SK-N-SH (cell line): ENCODE measurements at regions of chr14 and their contacts with region 1.

Region 1: DNA sequence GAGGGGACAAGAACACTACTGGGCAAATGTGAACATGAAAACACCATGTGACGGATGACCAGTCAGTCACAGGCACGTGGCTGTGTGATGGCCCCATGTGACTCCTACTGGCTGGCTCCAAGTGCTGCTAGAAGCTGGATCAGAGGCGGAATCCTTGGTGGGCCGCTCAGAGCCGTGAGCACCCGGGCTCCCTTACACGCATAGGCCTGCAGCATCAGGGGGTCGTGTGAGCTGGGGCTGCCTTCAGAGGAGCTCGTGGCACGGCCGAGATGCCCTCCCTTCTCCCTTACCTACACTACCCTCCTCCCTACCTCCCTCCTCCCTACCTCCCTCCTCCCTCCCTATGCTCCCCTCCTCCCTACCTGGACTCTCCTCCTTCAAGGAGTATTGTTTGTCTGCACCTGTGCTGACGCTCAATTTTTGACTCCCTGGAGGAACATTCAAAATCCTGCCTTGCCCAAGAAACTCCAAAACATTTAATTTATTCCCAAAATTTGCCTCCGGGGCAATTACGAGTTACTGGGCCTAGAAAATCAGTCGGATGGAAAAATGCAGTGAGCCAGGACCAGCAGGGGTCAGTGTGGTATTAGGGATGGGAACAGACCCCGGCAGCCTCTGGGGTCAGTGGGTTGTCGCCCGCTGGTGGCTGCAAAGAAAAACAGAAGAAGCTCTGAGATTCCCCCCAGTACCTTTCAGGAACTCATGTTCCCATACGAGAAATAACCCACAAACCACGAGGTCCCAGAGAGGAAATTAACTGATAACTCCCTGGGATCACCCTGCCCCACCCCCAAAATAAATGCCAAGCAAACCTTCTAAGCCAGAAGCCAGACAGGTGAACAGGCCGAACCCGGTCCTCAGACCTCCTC is 61.2 kb downstream of the C14orf132 start:
- DNase-seq: peak; percentile 81
- H3K4me3 ChIP-seq: peak overlapping the region in 1 of 2 experiments; percentile 45; a peak in 1 of 4 replicates
- H3K27ac ChIP-seq: no peak overlapping the region
- H3K4me1 ChIP-seq: peaks cover 10 to 52% of the 10 kb centered on the region in 2 experiments; a peak in 2 of 4 replicates
- H3K27me3 ChIP-seq: no peaks in the 10 kb centered on the region
- CTCF ChIP-seq: peak; percentile 99
- EP300 ChIP-seq: no peak
- RAD21 ChIP-seq: peak; percentile 100

Region 2: GRCh38 chr14:95123891-95124579 is 976.4 kb before region 1 on chr14:
- CTCF ChIA-PET with region 1: no interaction called
- POLR2A ChIA-PET with region 1: no interaction called
- DNase-seq: no peak
- H3K4me3 ChIP-seq: no peak overlapping the region
- H3K27ac ChIP-seq: no peak overlapping the region
- H3K4me1 ChIP-seq: peaks cover 4 to 11% of the 10 kb centered on the region in 2 experiments; a peak in 3 of 4 replicates
- H3K27me3 ChIP-seq: no peaks in the 10 kb centered on the region
- CTCF ChIP-seq: no peak
- EP300 ChIP-seq: no peak
- RAD21 ChIP-seq: no peak

Region 3: DNA sequence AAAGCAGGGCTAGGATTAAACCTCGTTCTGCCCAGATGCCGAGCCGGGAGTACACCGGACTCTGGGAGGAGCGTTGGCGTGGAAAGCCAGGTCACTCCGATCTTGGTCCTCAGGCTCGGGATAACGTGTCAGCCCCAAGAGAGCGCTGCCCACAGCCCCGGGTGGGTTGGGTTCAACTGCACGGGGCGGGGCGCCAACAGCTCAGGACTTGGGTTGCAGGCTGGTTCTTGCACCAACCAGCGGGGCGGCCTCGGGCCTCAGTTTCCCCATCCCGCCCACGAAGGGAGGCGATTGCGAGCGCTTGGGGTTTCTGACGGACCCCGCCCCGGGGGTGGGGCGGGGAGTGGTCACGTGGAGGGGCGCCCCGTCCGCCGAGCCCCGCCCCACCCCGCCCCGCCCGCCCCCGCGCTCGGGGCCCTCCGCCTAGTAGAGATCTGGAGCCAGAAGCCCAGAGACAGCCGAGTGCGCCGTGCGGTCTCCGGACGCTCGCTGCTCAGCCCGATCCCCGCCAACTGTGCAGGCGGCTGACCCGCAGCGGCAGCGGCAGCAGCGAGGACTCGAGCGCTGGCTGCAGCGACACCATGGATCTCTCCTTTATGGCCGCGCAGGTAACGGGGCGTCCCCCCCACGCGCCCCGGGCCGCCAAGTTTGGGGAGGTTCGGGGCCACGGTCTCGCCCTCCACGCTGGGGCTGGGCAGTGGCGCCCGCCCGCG is 61.3 kb before region 1 on chr14 and contains the start of gene C14orf132:
- CTCF ChIA-PET with region 1: interaction called, 41 read pairs
- POLR2A ChIA-PET with region 1: interaction called, 16 read pairs
- DNase-seq: peak; percentile 96
- H3K4me3 ChIP-seq: peak within 1 kb of the TSS; percentile 81 to 92
- H3K27ac ChIP-seq: peak within 1 kb of the TSS; percentile 45 to 90
- H3K4me1 ChIP-seq: peaks cover 7 to 32% of the 10 kb centered on the region in 2 experiments
- H3K27me3 ChIP-seq: no peaks in the 10 kb centered on the region
- CTCF ChIP-seq: no peak
- EP300 ChIP-seq: no peak
- RAD21 ChIP-seq: no peak
- polyA plus RNA-seq, gene C14orf132: 5.5 and 7.1 TPM in 2 replicates

Region 4: DNA sequence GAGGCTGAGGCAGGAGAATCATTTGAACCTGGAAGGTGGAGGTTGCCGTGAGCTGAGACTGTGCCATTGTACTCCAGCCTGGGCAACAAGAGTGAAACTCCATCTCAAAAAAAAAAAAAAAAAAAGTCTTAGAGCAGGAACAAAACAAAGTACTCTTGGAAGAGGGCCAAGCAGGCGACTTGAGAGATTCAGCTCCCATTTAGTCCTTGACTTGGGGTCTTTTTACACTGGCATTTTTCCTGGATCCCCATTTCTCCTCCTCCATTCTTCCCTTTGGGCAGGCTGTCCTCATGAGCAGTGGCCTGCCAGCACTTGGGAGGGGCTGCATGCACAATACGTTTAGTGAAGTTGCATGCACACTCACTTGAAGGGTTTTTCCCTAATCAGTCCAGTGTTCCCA is 11.6 kb after region 1 on chr14:
- CTCF ChIA-PET with region 1: interaction called, 51 read pairs
- POLR2A ChIA-PET with region 1: no interaction called
- DNase-seq: no peak
- H3K4me3 ChIP-seq: no peak overlapping the region
- H3K27ac ChIP-seq: no peak overlapping the region
- H3K4me1 ChIP-seq: peaks cover 0 to 6% of the 10 kb centered on the region in 2 experiments; a peak in 2 of 4 replicates
- H3K27me3 ChIP-seq: no peaks in the 10 kb centered on the region
- CTCF ChIP-seq: no peak
- EP300 ChIP-seq: no peak
- RAD21 ChIP-seq: no peak

Region 5: GRCh38 chr14:96160076-96160912 is 59.9 kb after region 1 on chr14:
- CTCF ChIA-PET with region 1: interaction called, 15 read pairs
- POLR2A ChIA-PET with region 1: no interaction called
- DNase-seq: no peak
- H3K4me3 ChIP-seq: no peak overlapping the region
- H3K27ac ChIP-seq: no peak overlapping the region
- H3K4me1 ChIP-seq: peaks cover 4 to 11% of the 10 kb centered on the region in 2 experiments; a peak in 2 of 4 replicates
- H3K27me3 ChIP-seq: no peaks in the 10 kb centered on the region
- CTCF ChIP-seq: no peak
- EP300 ChIP-seq: no peak
- RAD21 ChIP-seq: no peak

Region 6: GRCh38 chr14:96260341-96260821 is 160.0 kb after region 1 on chr14:
- CTCF ChIA-PET with region 1: interaction called, 49 read pairs
- POLR2A ChIA-PET with region 1: interaction called, 7 read pairs
- DNase-seq: no peak
- H3K4me3 ChIP-seq: no peak overlapping the region
- H3K27ac ChIP-seq: no peak overlapping the region
- H3K4me1 ChIP-seq: peaks cover 5 to 9% of the 10 kb centered on the region in 2 experiments
- H3K27me3 ChIP-seq: no peaks in the 10 kb centered on the region
- CTCF ChIP-seq: no peak
- EP300 ChIP-seq: no peak
- RAD21 ChIP-seq: no peak

Region 7: GRCh38 chr14:96297000-96297399 is 196.6 kb after region 1 on chr14:
- CTCF ChIA-PET with region 1: interaction called, 20 read pairs
- POLR2A ChIA-PET with region 1: no interaction called
- DNase-seq: peak; percentile 31
- H3K4me3 ChIP-seq: no peak overlapping the region
- H3K27ac ChIP-seq: no peak overlapping the region
- H3K4me1 ChIP-seq: peaks cover 0 to 3% of the 10 kb centered on the region in 2 experiments; a peak in 2 of 4 replicates
- H3K27me3 ChIP-seq: no peaks in the 10 kb centered on the region
- CTCF ChIP-seq: peak; percentile 69
- EP300 ChIP-seq: no peak
- RAD21 ChIP-seq: peak; percentile 73

Region 8: DNA sequence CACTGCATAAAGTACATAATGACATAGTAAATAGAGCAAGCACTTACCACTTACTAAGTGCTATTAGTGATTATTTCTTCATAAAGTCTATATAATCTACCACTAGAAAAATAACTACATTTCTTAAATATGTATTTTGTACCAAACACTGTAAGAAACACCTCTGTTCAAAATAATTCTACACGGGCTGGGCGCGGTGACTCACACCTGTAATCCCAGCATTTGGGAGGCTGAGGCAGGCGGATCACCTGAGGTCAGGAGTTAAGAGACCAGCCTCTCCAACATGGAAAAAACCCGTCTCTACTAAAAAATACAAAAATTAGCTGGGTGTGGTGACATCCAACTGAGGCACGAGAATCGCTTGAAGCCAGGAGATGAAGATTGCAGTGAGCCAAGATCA is 223.8 kb after region 1 on chr14:
- CTCF ChIA-PET with region 1: no interaction called
- POLR2A ChIA-PET with region 1: no interaction called
- DNase-seq: no peak
- H3K4me3 ChIP-seq: no peak overlapping the region
- H3K27ac ChIP-seq: no peak overlapping the region
- H3K4me1 ChIP-seq: no peaks in the 10 kb centered on the region
- H3K27me3 ChIP-seq: no peaks in the 10 kb centered on the region
- CTCF ChIP-seq: no peak
- EP300 ChIP-seq: no peak
- RAD21 ChIP-seq: no peak

Region 9: DNA sequence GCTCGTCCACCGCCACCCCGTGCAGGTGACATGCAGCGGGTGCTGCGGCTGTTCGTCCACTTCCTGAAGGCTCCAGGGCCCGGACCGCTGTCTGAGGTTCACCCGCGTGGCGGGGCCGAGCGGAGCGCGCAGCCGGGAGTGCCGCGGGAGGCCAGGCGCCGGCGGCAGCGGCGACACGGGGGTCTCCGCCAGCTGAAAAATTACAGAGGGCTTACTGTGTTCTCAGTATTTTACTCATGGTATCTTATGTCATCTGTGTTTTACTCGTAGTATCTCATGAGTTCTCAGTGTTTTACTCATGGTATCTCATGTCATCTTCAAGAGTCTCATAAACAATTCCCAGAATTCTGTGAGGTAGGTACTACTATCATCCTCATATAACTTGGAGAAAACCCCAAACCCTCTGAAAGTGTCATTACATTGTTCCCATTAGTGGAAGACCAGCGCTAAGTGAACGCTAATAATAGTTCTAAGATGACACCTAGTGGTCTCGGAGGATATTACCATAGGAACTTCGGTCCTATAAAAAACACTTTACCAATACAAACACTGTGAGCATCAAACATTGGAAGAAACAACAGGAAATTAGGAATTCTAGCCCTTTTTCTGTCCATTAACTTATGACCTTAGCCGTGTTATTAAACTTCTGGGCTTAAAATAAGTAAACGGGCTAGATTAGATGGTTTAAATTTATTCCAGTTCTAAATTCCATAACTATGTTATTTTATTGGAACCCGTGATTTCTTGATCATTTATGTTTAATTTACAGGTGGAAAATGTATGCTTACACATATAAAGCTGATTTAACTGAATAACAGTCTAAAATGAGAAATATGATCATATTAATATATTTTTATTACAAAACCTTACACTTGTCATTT is 324.0 kb after region 1 on chr14:
- CTCF ChIA-PET with region 1: interaction called, 38 read pairs
- POLR2A ChIA-PET with region 1: interaction called, 3 read pairs
- DNase-seq: peak; percentile 77
- H3K4me3 ChIP-seq: no peak overlapping the region; a peak in 1 of 4 replicates
- H3K27ac ChIP-seq: no peak overlapping the region
- H3K4me1 ChIP-seq: no peaks in the 10 kb centered on the region
- H3K27me3 ChIP-seq: no peaks in the 10 kb centered on the region
- CTCF ChIP-seq: peak; percentile 82
- EP300 ChIP-seq: no peak
- RAD21 ChIP-seq: peak; percentile 98